CD8-positive, alpha-beta T cell (primary cell): ENCODE measurements at regions of chr6 and their contacts with region 1.

Region 1: DNA sequence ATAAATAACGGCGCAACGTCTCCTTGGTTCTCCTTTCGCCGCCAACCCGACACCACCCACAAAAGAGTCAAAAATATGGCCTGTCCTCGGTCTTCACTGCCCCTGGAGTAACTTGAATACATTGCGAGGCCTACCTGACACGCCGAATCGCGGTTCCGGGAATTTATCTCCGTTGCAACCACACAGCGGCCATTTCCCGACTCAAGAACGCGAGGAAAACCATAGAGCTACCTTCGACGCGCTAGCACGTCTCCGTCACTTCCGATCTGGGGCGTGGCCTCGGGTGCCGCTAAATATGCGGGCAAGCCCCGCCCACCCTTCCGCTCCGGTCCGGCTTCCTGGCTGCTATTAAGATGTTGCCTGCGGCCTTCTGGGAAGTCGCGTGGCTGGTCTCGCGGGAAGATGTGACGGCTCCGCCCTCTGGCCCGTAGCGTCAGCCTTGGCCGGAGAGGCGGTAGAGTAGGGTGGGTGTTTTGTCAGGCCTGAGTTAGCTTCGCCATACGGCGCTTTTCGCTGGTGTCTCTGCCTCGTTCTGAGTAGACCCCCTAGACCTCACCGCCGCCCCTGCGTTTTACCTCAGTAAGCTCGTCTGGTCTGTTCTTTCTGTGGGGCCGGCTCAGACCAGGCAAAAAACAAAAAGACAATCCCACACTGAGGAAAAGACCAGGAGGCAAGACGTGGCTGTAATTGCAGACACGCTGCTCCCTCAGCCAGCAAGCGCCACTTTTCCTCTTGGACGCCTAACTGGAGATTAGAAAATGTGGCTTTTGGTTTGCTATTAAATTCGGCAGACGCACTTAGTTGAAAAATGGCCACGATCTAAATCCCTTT is at the start of gene BCLAF1:
- DNase-seq: peak; percentile 98 to 100 (median 99)
- ATAC-seq: peak; percentile 75
- H3K4me3 ChIP-seq: peak within 1 kb of the TSS; percentile 87 to 92
- H3K4me3 Mint-ChIP-seq: peak within 1 kb of the TSS; percentile 97
- H3K27ac ChIP-seq: peak within 1 kb of the TSS; percentile 98 to 100
- H3K27ac Mint-ChIP-seq: peak within 1 kb of the TSS; percentile 100
- H3K4me1 ChIP-seq: peaks cover 44% of the 10 kb centered on the region
- H3K4me1 Mint-ChIP-seq: peaks cover 44% of the 10 kb centered on the region
- H3K27me3 ChIP-seq: no peaks in the 10 kb centered on the region
- H3K27me3 Mint-ChIP-seq: no peaks in the 10 kb centered on the region
- CTCF ChIP-seq: no peak
- total RNA-seq, gene BCLAF1: 471 to 494 TPM

Region 2: DNA sequence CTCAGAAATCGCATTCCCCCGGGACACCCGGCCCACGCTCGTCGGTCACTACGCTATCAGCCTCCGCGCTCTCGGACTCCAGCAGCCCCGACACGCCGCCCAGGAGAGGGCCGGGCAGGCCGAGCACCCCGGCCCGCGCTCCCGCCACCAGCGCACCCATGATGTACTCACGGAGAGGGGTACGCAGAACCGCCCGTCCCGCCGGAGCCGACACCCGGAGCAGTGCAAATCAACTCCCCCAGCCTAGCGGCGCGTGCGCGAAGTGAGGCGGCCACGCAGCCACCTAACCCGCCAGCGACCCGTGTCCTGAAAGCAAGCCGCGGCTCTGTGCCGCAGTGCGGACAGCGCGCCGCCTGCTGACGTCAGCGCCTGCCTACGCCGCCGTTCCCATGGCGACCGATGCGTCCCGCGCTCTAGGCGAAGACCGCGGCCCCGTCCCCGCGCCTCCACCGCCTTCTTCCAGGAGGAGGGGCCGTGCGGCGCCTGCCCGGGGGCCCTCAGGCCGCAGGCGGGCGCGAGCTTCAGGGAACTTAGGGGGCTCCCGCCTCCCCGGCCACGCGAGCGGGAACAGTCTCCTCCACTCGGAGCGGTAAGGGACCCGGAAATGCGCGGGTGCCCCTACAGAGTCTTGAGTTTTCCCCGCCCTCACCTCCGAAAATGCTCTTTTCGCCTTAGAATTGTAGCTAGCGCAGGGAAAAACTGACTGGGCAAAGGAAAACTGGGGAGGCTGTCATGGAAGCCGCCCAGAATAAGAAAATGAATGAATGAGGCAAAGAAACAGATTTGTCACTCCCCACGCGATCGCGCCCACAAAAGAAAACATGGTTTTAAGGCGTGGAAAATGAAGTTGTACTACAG is 792.2 kb before region 1 on chr6 and contains the start of gene AHI1:
- CTCF ChIA-PET with region 1: interaction called, 3 read pairs
- POLR2A ChIA-PET with region 1: interaction called, 37 read pairs
- intact Hi-C with region 1: loop called in 1 of 2 experiments (anchors 1 kb)
- DNase-seq: peak; percentile 81 to 95 (median 86)
- ATAC-seq: peak; percentile 72
- H3K4me3 ChIP-seq: peak within 1 kb of the TSS; percentile 87 to 95
- H3K4me3 Mint-ChIP-seq: no peak within 1 kb of the TSS
- H3K27ac ChIP-seq: peak within 1 kb of the TSS; percentile 91 to 98
- H3K27ac Mint-ChIP-seq: no peak within 1 kb of the TSS
- H3K4me1 ChIP-seq: peaks cover 6% of the 10 kb centered on the region
- H3K4me1 Mint-ChIP-seq: peaks cover 8% of the 10 kb centered on the region
- H3K27me3 ChIP-seq: no peaks in the 10 kb centered on the region
- H3K27me3 Mint-ChIP-seq: no peaks in the 10 kb centered on the region
- CTCF ChIP-seq: no peak
- total RNA-seq, gene AHI1: 16.0 to 17.9 TPM

Region 3: DNA sequence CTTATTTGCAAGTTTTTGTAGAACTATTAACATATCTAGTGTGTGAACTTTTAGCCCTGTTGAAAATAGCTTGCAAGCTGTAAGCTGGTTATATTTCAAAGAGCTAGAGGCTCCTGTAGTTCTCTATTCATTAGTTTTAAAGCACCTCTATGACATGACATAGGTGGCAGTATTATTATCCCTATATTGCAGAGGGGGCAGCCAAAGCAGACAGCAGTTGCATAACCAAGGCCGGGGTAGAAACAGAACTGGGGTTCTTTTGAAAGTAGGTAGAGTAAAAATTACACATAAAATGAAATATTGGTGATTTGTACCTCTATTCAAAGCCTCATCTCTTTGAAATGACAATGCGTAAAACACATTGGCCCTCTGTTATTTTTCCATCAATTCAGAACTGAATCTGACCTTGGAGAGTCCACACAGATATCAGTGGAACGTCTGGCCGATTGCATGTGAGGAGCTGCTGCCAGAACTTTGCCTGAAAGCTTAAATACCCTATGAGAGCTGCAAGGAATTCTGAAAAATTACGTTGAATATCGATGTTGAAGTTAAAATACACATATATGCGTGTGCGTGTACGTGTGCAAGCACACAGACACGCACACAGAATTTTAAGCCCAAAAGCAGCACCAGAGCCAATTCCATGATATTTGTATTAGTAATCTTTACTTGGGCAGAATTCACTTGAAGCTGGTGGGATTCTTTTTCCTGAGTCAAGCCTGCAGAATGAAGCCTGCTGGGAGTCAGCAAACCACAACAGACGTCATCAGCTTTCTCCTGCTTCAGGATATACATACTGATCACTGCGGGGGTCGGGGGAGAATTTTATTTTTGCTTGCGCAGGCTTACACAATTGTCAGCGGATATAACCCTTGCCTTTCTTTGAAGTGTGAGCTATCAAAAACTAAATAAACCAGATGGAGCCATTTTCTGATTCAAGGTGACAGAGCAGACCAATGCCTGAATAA is 275.1 kb before region 1 on chr6:
- CTCF ChIA-PET with region 1: no interaction called
- POLR2A ChIA-PET with region 1: no interaction called
- intact Hi-C with region 1: no loop called
- DNase-seq: no peak
- ATAC-seq: no peak
- H3K4me3 ChIP-seq: no peak overlapping the region
- H3K4me3 Mint-ChIP-seq: no peak overlapping the region
- H3K27ac ChIP-seq: no peak overlapping the region
- H3K27ac Mint-ChIP-seq: no peak overlapping the region
- H3K4me1 ChIP-seq: no peaks in the 10 kb centered on the region
- H3K4me1 Mint-ChIP-seq: no peaks in the 10 kb centered on the region
- H3K27me3 ChIP-seq: no peaks in the 10 kb centered on the region
- H3K27me3 Mint-ChIP-seq: no peaks in the 10 kb centered on the region
- CTCF ChIP-seq: no peak

Region 4: DNA sequence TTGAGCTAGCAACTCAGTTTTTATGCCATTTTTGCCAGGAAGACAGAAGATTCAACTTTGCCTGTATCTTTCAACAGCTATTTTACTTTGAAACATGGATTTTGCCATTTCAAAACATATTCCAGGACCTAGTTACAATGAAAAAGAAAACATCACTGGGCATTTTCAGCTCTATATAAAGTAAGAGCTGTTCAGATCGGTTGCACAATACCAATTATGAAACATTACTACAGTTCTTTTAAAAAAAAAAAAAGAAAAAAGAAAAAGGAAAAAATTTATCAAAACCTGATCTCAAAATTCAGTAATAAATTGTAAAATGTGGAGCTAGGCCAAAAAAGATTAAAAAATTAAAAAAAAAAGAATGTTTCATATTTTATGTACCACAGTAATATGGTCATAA is 15.7 kb before region 1 on chr6:
- CTCF ChIA-PET with region 1: interaction called, 5 read pairs
- POLR2A ChIA-PET with region 1: interaction called, 15 read pairs
- intact Hi-C with region 1: loop called in 1 of 2 experiments (anchors 2 kb)
- DNase-seq: no peak
- ATAC-seq: no peak
- H3K4me3 ChIP-seq: no peak overlapping the region
- H3K4me3 Mint-ChIP-seq: no peak overlapping the region
- H3K27ac ChIP-seq: no peak overlapping the region
- H3K27ac Mint-ChIP-seq: no peak overlapping the region
- H3K4me1 ChIP-seq: peaks cover 9% of the 10 kb centered on the region
- H3K4me1 Mint-ChIP-seq: peaks cover 54% of the 10 kb centered on the region
- H3K27me3 ChIP-seq: no peaks in the 10 kb centered on the region
- H3K27me3 Mint-ChIP-seq: no peaks in the 10 kb centered on the region
- CTCF ChIP-seq: no peak

Region 5: GRCh38 chr6:136317021-136317694 is 27.4 kb after region 1 on chr6:
- CTCF ChIA-PET with region 1: interaction called, 7 read pairs
- POLR2A ChIA-PET with region 1: interaction called, 10 read pairs
- intact Hi-C with region 1: loop called (anchors 1 to 2 kb)
- DNase-seq: peak; percentile 34 to 84 (median 66)
- ATAC-seq: peak; percentile 97
- H3K4me3 ChIP-seq: no peak overlapping the region
- H3K4me3 Mint-ChIP-seq: no peak overlapping the region
- H3K27ac ChIP-seq: no peak overlapping the region
- H3K27ac Mint-ChIP-seq: no peak overlapping the region
- H3K4me1 ChIP-seq: no peaks in the 10 kb centered on the region
- H3K4me1 Mint-ChIP-seq: no peaks in the 10 kb centered on the region
- H3K27me3 ChIP-seq: peaks cover 0 to 3% of the 10 kb centered on the region in 2 experiments
- H3K27me3 Mint-ChIP-seq: peaks cover 2% of the 10 kb centered on the region
- CTCF ChIP-seq: peak; percentile 93

Region 6: GRCh38 chr6:137415127-137415833 is 1125.5 kb after region 1 on chr6:
- CTCF ChIA-PET with region 1: no interaction called
- POLR2A ChIA-PET with region 1: no interaction called
- intact Hi-C with region 1: no loop called
- DNase-seq: peak; percentile 45 to 86 (median 63)
- ATAC-seq: peak; percentile 86
- H3K4me3 ChIP-seq: peak overlapping the region; percentile 61 to 63
- H3K4me3 Mint-ChIP-seq: peak overlapping the region; percentile 83
- H3K27ac ChIP-seq: peak overlapping the region; percentile 31 to 84
- H3K27ac Mint-ChIP-seq: peak overlapping the region; percentile 83
- H3K4me1 ChIP-seq: peaks cover 8% of the 10 kb centered on the region
- H3K4me1 Mint-ChIP-seq: peaks cover 14% of the 10 kb centered on the region
- H3K27me3 ChIP-seq: no peaks in the 10 kb centered on the region
- H3K27me3 Mint-ChIP-seq: no peaks in the 10 kb centered on the region
- CTCF ChIP-seq: peak; percentile 54